Activated B cell treated with CpG ODN at 0.5 μM for 24 hours (primary cell): ENCODE measurements at regions of chr4 and their contacts with region 1.

Region 1: GRCh38 chr4:153249199-153250041 is 45.2 kb downstream of the TRIM2 start:
- DNase-seq: peak; percentile 92
- ATAC-seq: peak; percentile 99
- H3K4me3 Mint-ChIP-seq: peak overlapping the region; percentile 88
- H3K27ac Mint-ChIP-seq: peak overlapping the region; percentile 88
- H3K4me1 Mint-ChIP-seq: peaks cover 30% of the 10 kb centered on the region
- H3K27me3 Mint-ChIP-seq: no peaks in the 10 kb centered on the region
- CTCF ChIP-seq: no peak

Region 2: DNA sequence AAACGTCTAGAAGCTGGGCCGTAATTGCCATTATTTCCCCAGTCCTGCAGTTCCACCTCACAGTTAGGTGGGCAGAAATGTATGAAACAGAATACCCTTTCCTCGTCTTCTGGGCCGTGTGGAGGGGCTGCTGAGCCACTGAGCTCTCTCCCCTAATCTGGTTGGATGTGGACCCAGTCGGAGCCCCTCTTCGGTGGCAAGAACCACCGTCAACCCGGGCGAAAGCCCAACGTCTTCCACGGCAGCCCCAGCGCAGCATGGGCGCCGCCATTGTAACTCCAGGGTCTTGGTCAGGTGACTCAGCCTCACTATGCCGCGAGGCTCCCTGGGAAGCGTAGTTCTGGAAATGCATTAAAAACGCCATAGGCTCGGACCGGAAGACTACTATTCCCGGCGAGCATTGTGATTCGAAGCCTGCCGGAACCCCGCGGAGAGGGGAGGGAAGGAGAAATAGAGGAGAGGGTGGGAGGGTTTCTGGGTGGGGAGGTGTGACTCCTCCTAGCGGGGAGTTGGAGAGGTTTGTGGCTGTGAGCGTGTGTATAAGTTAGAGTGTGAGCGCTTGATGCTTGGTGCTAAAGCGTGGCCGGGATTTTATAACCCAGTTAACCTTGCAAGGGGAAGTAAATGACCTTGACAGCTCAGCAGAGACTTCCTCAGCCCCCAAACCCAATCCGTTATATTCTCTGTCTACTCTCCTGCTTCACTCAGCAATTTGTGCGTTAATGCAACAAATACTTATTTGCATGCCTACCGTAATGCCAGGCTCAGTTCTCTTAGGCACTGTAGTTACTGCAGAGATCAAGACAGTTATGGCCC is 1488.5 kb before region 1 on chr4 and contains the start of gene GATB:
- CTCF ChIA-PET with region 1: no interaction called
- POLR2A ChIA-PET with region 1: no interaction called
- intact Hi-C with region 1: loop called (anchors 1 kb)
- DNase-seq: peak; percentile 76
- ATAC-seq: peak; percentile 98
- H3K4me3 Mint-ChIP-seq: peak within 1 kb of the TSS; percentile 100
- H3K27ac Mint-ChIP-seq: peak within 1 kb of the TSS; percentile 98
- H3K4me1 Mint-ChIP-seq: peaks cover 13% of the 10 kb centered on the region
- H3K27me3 Mint-ChIP-seq: peaks cover 6% of the 10 kb centered on the region
- CTCF ChIP-seq: no peak
- total RNA-seq, gene GATB: 22.1 and 22.9 TPM in 2 replicates

Region 3: DNA sequence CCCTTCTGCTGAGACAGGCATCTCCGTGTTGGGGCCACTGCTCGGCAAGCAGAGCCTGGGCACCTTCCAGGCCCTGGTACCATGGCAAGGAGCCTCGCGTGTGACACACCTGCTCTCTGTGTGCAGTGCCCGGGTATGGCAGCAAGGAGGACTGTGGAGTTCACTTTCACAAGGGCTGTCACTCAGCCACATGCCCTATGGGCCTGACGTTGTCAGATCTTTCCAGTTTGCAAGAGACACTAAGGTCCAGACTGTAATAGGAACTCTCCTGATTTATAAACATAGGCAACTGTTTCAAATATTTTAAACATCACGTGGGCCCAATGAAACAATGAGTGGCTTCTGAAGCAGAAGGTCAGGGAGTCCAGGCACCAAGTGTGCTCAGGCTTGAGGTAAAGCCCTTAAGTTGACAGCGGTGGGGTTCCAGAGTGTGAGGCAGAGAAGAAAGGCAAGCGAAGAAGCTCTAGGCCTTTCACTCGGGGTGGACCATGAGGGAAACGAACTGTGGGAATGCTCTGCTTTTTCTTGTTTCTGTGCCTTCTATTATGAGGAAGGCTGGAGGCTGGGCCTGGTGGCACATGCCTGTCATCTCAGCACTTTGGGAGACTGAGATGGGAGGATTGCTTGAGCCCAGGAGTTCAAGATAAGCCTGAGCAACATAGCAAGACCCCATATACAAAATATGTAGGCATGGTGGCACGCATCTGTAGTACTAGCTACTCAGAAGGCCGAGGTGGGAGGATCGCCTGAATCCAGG is 153.8 kb before region 1 on chr4:
- CTCF ChIA-PET with region 1: no interaction called
- POLR2A ChIA-PET with region 1: no interaction called
- intact Hi-C with region 1: no loop called
- DNase-seq: no peak
- ATAC-seq: no peak
- H3K4me3 Mint-ChIP-seq: no peak overlapping the region
- H3K27ac Mint-ChIP-seq: no peak overlapping the region
- H3K4me1 Mint-ChIP-seq: no peaks in the 10 kb centered on the region
- H3K27me3 Mint-ChIP-seq: no peaks in the 10 kb centered on the region
- CTCF ChIP-seq: no peak

Region 4: DNA sequence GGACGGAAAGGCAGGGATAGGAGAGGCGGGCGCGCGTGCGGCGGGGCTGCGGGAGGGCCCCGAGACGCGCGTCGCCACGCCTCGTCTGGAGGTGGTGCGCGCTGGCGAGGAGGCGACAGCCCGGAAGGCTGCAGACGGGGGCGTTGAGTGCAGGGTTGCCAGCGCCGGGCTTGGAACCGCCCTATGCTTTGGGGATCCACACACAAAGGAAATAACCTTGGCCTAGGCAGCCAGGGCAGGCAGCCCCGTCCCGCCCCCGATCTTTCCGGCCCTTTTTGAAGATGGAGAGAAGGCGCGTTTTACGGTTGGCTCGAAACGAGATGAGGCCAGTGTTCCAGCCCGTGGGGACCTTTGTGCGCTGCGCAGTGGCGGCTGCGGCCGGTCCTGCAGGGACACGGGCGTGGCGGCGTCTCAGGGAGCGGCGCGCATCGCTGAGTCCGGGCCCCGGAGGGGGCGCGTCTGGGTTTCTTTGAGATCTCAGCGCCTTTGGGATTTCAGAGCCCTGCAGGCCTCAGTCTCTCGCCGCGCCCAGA is 96.0 kb before region 1 on chr4:
- CTCF ChIA-PET with region 1: no interaction called
- POLR2A ChIA-PET with region 1: interaction called, 4 read pairs
- intact Hi-C with region 1: loop called (anchors 1 kb)
- DNase-seq: peak; percentile 63
- ATAC-seq: peak; percentile 76
- H3K4me3 Mint-ChIP-seq: peak overlapping the region; percentile 87
- H3K27ac Mint-ChIP-seq: peak overlapping the region; percentile 85
- H3K4me1 Mint-ChIP-seq: peaks cover 35% of the 10 kb centered on the region
- H3K27me3 Mint-ChIP-seq: peaks cover 30% of the 10 kb centered on the region
- CTCF ChIP-seq: no peak

Region 5: GRCh38 chr4:153166716-153167501 is 82.5 kb before region 1 on chr4:
- CTCF ChIA-PET with region 1: no interaction called
- POLR2A ChIA-PET with region 1: no interaction called
- intact Hi-C with region 1: no loop called
- DNase-seq: no peak
- ATAC-seq: no peak
- H3K4me3 Mint-ChIP-seq: no peak overlapping the region
- H3K27ac Mint-ChIP-seq: no peak overlapping the region
- H3K4me1 Mint-ChIP-seq: no peaks in the 10 kb centered on the region
- H3K27me3 Mint-ChIP-seq: peaks cover 22% of the 10 kb centered on the region
- CTCF ChIP-seq: no peak

Region 6: GRCh38 chr4:153221783-153222706 is 27.4 kb before region 1 on chr4:
- CTCF ChIA-PET with region 1: interaction called, 4 read pairs
- POLR2A ChIA-PET with region 1: interaction called, 9 read pairs
- intact Hi-C with region 1: loop called (anchors 1 kb)
- DNase-seq: peak; percentile 30
- ATAC-seq: peak; percentile 49
- H3K4me3 Mint-ChIP-seq: peak overlapping the region; percentile 89
- H3K27ac Mint-ChIP-seq: peak overlapping the region; percentile 73
- H3K4me1 Mint-ChIP-seq: peaks cover 37% of the 10 kb centered on the region
- H3K27me3 Mint-ChIP-seq: peaks cover 4% of the 10 kb centered on the region
- CTCF ChIP-seq: no peak

Region 7: DNA sequence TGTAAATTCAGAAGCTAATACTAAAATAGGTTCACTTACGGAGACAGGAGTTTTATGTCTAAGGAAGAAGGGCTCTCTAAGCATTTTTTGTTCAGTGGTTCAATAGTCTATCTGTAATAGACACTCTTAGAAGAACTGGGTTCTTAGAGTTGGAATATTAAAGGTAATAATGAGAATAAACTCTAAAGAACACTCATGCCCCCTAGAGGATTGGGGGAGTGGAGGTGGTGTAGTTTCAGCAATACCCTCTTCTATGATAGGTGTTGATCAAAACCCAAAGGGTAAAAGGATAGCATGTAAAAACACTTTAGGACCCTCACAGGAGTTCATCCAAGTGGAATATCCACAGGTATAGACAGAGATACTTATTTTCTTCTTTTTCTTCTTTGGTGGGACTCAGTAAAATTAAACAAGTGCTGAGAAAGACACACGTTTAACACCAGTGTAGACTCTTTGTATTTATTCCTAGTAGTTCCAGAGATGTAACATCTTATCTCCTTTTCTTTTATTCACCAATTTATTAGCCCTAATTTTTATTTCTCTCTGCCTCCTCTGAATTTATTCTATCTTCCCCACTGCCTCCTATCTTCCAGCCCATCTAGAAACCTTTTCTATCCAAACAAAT is 69.4 kb after region 1 on chr4:
- CTCF ChIA-PET with region 1: interaction called, 3 read pairs
- POLR2A ChIA-PET with region 1: no interaction called
- intact Hi-C with region 1: loop called (anchors 1 kb)
- DNase-seq: no peak
- ATAC-seq: peak; percentile 65
- H3K4me3 Mint-ChIP-seq: no peak overlapping the region
- H3K27ac Mint-ChIP-seq: no peak overlapping the region
- H3K4me1 Mint-ChIP-seq: no peaks in the 10 kb centered on the region
- H3K27me3 Mint-ChIP-seq: no peaks in the 10 kb centered on the region
- CTCF ChIP-seq: peak; percentile 27

Region 8: GRCh38 chr4:153750197-153750817 is 500.9 kb after region 1 on chr4:
- CTCF ChIA-PET with region 1: no interaction called
- POLR2A ChIA-PET with region 1: no interaction called
- intact Hi-C with region 1: loop called (anchors 1 kb)
- DNase-seq: no peak
- ATAC-seq: peak; percentile 57
- H3K4me3 Mint-ChIP-seq: no peak overlapping the region
- H3K27ac Mint-ChIP-seq: no peak overlapping the region
- H3K4me1 Mint-ChIP-seq: no peaks in the 10 kb centered on the region
- H3K27me3 Mint-ChIP-seq: peaks cover 13% of the 10 kb centered on the region
- CTCF ChIP-seq: peak; percentile 19